ENCODE measurements at regions of chr20 and their contacts with region 1.

Region 1: DNA sequence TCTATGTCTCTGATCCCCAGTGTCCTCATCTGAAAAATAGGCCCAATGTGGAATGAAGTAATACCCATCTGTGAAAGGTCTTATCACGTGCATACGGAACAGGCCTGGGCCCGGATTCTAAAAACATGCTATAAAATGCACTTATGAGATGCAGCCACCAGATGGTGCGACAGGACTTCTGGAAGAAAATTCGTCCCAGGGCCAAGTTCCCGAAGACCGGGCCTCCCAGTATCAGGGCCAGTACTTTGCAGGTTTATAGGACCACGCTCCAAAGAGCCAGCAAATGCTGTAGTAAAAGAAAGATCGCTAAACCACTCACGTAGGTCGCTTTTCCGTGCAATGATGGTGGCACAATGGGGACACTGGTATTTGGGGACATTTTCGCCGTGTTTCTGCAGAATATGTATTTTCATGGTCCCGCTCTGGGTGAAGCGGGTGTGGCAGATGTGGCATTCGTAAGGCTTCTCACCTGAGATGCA is 10.6 kb downstream of the CTCFL start:
- DNase-seq: peak in 6 of 9 donors; percentile 13 to 31 (median 23)
- ATAC-seq: peak; percentile 45
- H3K4me3 ChIP-seq: no peak overlapping the region
- H3K4me3 Mint-ChIP-seq: no peak overlapping the region
- H3K27ac ChIP-seq: no peak overlapping the region
- H3K27ac Mint-ChIP-seq: peak overlapping the region in 1 of 9 donors; percentile 27
- H3K4me1 ChIP-seq: no peaks in the 10 kb centered on the region
- H3K4me1 Mint-ChIP-seq: no peaks in the 10 kb centered on the region
- H3K27me3 ChIP-seq: peaks cover 0 to 3% of the 10 kb centered on the region in 2 donors
- H3K27me3 Mint-ChIP-seq: peaks cover 0 to 14% (median 5%) of the 10 kb centered on the region in 5 donors

Region 2: GRCh38 chr20:57546956-57547649 is 32.8 kb after region 1 on chr20:
- CTCF ChIA-PET with region 1: no interaction called
- POLR2A ChIA-PET with region 1: no interaction called
- intact Hi-C with region 1: no loop called
- DNase-seq: no peak
- ATAC-seq: no peak
- H3K4me3 ChIP-seq: no peak overlapping the region
- H3K4me3 Mint-ChIP-seq: no peak overlapping the region
- H3K27ac ChIP-seq: no peak overlapping the region
- H3K27ac Mint-ChIP-seq: no peak overlapping the region
- H3K4me1 ChIP-seq: no peaks in the 10 kb centered on the region
- H3K4me1 Mint-ChIP-seq: peaks cover 0 to 5% (median 0%) of the 10 kb centered on the region in 7 donors
- H3K27me3 ChIP-seq: no peaks in the 10 kb centered on the region
- H3K27me3 Mint-ChIP-seq: peaks cover 0 to 19% (median 5%) of the 10 kb centered on the region in 5 donors

Region 3: GRCh38 chr20:58179432-58180099 is 665.3 kb after region 1 on chr20:
- CTCF ChIA-PET with region 1: no interaction called
- POLR2A ChIA-PET with region 1: no interaction called
- intact Hi-C with region 1: loop called in 1 of 2 experiments (anchors 10 kb)
- DNase-seq: peak; percentile 37 to 86 (median 71)
- ATAC-seq: peak; percentile 92
- H3K4me3 ChIP-seq: peak overlapping the region; percentile 54
- H3K4me3 Mint-ChIP-seq: peak overlapping the region; percentile 48 to 82 (median 71)
- H3K27ac ChIP-seq: no peak overlapping the region
- H3K27ac Mint-ChIP-seq: no peak overlapping the region
- H3K4me1 ChIP-seq: peaks cover 3 to 8% of the 10 kb centered on the region in 2 donors
- H3K4me1 Mint-ChIP-seq: peaks cover 0 to 17% (median 7%) of the 10 kb centered on the region in 7 donors
- H3K27me3 ChIP-seq: no peaks in the 10 kb centered on the region
- H3K27me3 Mint-ChIP-seq: peaks cover 9 to 28% (median 20%) of the 10 kb centered on the region in 5 donors

Measured in naive thymus-derived CD4-positive, alpha-beta T cell (primary cell).